B cell (primary cell): ENCODE measurements at regions of chr6 and their contacts with region 1.

Region 1: DNA sequence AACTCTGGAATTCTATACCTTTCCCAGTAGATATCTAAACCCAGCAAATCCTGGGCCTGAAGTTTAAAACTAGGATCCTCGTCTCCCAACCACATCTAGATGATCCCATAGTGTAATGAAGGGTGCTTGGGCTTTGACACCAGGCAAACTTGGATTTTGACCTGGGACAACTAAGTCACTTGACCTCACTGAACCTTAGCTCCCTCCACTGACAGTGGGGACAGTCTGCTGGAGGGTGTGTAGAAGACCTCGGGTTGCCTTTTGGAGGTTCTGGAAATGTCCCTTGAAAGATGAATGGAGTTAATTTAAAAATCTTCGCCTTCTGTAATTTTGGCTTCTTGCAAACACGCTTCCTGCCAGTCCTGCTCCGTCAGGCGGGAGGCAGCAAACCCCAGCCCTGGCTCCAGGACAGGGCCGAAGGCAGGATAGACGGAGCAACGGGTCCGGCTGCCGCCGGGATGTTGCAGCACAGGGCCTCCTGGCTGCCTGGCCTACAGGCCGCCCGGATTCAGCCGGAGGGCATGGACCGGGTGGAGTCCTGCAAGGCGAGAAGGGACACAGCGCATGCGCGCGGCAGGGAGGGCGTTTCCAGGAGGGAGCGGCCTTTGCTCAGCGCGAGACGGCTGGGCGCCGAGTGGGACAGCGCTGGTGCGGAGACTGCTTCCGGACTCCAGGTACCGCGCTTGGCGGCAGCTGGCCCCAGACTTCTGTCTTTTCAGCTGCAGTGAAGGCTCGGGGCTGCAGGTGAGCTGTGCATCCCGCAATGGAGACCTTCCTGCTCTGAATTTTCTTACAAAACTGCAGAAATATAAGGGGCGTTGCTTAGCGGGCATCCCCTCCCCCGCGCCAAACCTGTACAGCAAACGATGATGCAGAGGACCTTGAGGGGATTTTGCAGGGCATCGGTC is at the start of gene TMEM14A:
- DNase-seq: peak; percentile 92
- ATAC-seq: peak; percentile 98
- H3K4me3 ChIP-seq: peak within 1 kb of the TSS; percentile 59 to 86 (median 67)
- H3K4me3 Mint-ChIP-seq: peak within 1 kb of the TSS; percentile 91
- H3K27ac ChIP-seq: no peak within 1 kb of the TSS
- H3K27ac Mint-ChIP-seq: peak within 1 kb of the TSS; percentile 81
- H3K4me1 ChIP-seq: peaks cover 20 to 23% of the 10 kb centered on the region in 2 donors
- H3K4me1 Mint-ChIP-seq: peaks cover 40% of the 10 kb centered on the region
- H3K27me3 ChIP-seq: no peaks in the 10 kb centered on the region
- H3K27me3 Mint-ChIP-seq: no peaks in the 10 kb centered on the region
- CTCF ChIP-seq: no peak
- total RNA-seq, gene TMEM14A: 5.9 and 9.5 TPM in 2 replicates

Region 2: GRCh38 chr6:52653151-52653550 is 17.6 kb before region 1 on chr6:
- CTCF ChIA-PET with region 1: interaction called, 8 read pairs
- POLR2A ChIA-PET with region 1: no interaction called
- intact Hi-C with region 1: loop called (anchors 2 kb)
- DNase-seq: no peak
- ATAC-seq: no peak
- H3K4me3 ChIP-seq: no peak overlapping the region
- H3K4me3 Mint-ChIP-seq: no peak overlapping the region
- H3K27ac ChIP-seq: no peak overlapping the region
- H3K27ac Mint-ChIP-seq: no peak overlapping the region
- H3K4me1 ChIP-seq: no peaks in the 10 kb centered on the region
- H3K4me1 Mint-ChIP-seq: peaks cover 4% of the 10 kb centered on the region
- H3K27me3 ChIP-seq: peaks cover 0 to 15% (median 5%) of the 10 kb centered on the region in 4 experiments
- H3K27me3 Mint-ChIP-seq: peaks cover 22% of the 10 kb centered on the region
- CTCF ChIP-seq: no peak